Panc1 (cell line): ENCODE measurements at regions of chr12 and their contacts with region 1.

Region 1: DNA sequence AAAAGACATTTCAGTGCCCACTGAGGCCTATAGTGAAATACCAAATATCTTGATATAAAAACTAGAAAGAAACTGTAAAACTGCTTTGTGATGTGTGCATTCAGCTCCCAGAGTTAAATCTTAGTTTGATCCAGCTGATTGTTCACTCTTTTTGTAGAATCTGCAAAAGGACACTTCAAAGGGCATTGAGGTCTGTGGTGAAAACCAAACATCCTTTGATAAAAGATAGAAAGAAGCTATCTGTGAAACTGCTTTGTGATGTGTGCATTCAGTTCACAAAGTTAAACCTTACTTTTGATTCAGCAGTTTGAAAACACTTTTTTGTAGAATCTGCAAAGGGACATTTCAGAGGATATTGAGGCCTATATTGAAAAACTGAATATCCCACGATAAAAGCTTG is 290.7 kb upstream of the ALG10B start:
- DNase-seq: no peak
- ATAC-seq: no peak
- H3K4me3 ChIP-seq: no peak overlapping the region
- H3K27ac ChIP-seq: no peak overlapping the region
- H3K4me1 ChIP-seq: no peaks in the 10 kb centered on the region
- H3K27me3 ChIP-seq: no peaks in the 10 kb centered on the region
- CTCF ChIP-seq: no peak

Region 2: DNA sequence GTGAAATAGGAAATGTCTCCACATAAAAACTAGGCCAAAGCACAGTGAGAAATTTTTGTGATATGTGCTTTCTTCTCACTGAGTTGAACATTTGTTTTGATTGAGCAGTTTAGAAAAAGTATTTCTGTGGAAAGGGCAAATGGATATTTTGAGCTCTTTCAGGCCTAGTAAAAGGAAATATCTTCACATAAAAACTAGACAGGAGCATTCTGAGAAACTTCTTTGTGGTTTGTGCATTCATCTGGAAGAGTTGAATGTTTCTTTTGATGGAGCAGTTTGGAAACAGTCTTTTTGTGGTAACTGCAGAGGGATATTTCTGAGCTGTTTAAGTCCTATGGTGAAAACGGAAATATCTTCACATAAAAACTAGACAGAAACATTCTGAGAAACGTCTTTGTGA is 292.1 kb before region 1 on chr12:
- CTCF ChIA-PET with region 1: no interaction called
- POLR2A ChIA-PET with region 1: no interaction called
- in situ Hi-C with region 1: no loop called
- intact Hi-C with region 1: loop called (anchors 5 kb)
- DNase-seq: no peak
- ATAC-seq: no peak
- H3K4me3 ChIP-seq: no peak overlapping the region
- H3K27ac ChIP-seq: no peak overlapping the region
- H3K4me1 ChIP-seq: no peaks in the 10 kb centered on the region
- H3K27me3 ChIP-seq: no peaks in the 10 kb centered on the region
- CTCF ChIP-seq: no peak